Upper lobe of right lung (tissue), 1 donor: ENCODE measurements at regions of chr2 and their contacts with region 1.

Region 1: GRCh38 chr2:220687231-220687843 is 884.8 kb downstream of the EPHA4 start:
- DNase-seq: peak; percentile 68
- ATAC-seq: peak; percentile 95
- H3K4me3 ChIP-seq: no peak overlapping the region
- H3K27ac ChIP-seq: no peak overlapping the region
- H3K4me1 ChIP-seq: no peaks in the 10 kb centered on the region
- H3K27me3 ChIP-seq: no peaks in the 10 kb centered on the region
- CTCF ChIP-seq: peak; percentile 89

Region 2: DNA sequence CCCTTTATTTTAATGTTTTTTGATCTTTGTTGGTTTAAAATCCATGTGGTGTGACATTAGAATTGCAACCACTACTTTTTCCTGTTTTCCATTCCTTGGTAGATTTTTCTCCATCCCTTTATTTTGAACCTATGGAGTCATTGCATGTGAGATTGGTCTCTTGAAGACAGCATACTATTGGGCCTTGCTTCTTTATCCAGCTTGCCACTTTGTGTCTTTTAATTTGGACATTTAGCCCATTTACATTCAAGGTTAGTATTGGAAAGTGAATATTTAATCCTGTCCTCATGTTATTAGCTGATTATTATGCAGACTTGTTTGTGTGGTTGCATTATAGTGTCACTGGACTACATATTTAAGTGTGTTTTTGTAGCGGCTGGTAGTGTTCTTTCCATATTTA is 277.0 kb before region 1 on chr2:
- intact Hi-C with region 1: no loop called
- DNase-seq: no peak
- ATAC-seq: no peak
- H3K4me3 ChIP-seq: no peak overlapping the region
- H3K27ac ChIP-seq: no peak overlapping the region
- H3K4me1 ChIP-seq: no peaks in the 10 kb centered on the region
- H3K27me3 ChIP-seq: no peaks in the 10 kb centered on the region
- CTCF ChIP-seq: no peak

Region 3: DNA sequence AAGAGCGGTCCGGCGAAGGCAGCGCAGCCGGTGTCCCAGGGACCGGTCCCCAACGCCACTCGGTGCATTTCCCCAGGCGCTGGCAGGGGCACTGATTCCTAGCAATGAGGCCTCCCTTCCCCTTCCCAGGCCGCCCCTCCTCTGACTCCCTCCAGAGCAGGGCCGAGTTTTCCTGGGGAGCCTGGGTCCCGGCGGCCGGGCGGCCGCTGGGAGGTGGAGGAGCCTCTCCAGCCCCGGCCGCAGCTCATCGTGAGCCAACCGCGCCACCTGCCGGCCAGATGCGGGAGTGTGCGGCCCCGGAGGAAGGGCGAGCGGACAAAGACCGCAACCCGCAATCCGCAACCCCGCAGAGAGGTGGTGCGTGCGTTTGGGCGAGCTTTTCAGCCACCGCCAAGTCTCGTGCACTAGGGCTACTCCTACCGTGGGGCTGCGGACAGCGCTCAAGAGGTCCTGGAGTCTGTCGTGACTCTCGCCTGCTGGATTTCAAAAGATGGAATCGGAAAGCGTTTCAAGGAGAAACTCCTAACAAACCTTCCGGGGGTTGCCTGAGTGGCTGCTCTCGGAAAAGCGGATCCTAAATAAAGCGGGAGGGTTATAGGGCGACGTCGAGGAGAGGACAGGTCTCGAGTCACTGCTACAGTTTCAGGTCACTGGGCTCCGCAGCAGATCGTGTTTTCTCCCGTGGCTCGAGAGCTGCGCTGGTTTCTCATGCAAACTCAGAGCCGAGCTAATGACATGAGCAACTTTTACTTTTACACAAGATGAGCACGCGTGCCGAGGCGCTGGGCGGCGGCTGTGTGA is 886.3 kb after region 1 on chr2:
- intact Hi-C with region 1: loop called (anchors 5 kb)
- DNase-seq: peak; percentile 93
- ATAC-seq: peak; percentile 87
- H3K4me3 ChIP-seq: peak overlapping the region; percentile 74
- H3K27ac ChIP-seq: peak overlapping the region; percentile 81
- H3K4me1 ChIP-seq: peaks cover 3% of the 10 kb centered on the region
- H3K27me3 ChIP-seq: peaks cover 27% of the 10 kb centered on the region
- CTCF ChIP-seq: peak; percentile 97